ENCODE measurements at regions of chr1 and their contacts with region 1.

Region 1: DNA sequence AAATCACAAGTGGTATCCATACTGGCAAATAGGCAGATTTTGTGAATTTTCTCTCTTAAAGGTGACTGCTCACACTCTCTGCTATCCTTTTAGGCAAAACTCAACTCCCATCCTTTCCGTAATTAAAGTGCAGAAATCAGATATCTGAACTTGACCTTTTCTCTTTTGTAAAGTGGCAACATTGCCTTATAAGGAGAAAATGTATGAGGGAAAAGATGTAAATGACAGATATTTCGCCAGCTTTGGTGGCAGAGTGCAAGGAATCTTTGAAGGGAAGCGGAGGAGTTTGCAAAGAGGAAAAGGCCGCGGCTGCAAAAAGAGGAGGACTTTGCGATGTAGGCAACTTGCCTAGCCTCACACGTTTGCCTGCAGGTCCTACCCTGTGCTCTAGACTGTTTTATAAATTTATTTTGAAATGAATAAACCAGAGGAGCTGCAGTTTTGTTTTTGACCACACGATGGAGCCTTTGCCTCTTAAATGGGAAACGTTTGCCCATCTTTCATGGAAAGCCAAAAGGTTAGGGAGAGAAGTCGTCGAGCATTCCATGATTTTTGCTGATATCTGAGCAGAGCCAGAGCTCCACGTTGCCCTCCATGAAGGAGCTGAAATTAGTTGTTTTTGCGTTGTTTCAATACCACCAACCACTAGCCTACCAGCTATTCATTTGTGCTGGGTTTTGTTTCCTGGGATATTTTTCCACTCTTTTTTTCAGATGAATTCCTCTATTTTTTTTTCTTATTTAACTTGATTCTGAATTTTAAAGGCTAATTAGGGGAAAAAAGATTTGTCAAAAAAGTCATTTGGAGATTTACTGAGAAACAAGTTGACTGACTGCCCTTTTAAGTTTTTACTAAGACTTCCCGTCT is 242.3 kb downstream of the LMX1A start:
- DNase-seq: peak; percentile 85
- H3K4me3 Mint-ChIP-seq: no peak overlapping the region
- H3K27ac Mint-ChIP-seq: no peak overlapping the region
- H3K4me1 Mint-ChIP-seq: peaks cover 17% of the 10 kb centered on the region
- H3K27me3 Mint-ChIP-seq: peaks cover 16% of the 10 kb centered on the region
- CTCF ChIP-seq: peak; percentile 96

Region 2: DNA sequence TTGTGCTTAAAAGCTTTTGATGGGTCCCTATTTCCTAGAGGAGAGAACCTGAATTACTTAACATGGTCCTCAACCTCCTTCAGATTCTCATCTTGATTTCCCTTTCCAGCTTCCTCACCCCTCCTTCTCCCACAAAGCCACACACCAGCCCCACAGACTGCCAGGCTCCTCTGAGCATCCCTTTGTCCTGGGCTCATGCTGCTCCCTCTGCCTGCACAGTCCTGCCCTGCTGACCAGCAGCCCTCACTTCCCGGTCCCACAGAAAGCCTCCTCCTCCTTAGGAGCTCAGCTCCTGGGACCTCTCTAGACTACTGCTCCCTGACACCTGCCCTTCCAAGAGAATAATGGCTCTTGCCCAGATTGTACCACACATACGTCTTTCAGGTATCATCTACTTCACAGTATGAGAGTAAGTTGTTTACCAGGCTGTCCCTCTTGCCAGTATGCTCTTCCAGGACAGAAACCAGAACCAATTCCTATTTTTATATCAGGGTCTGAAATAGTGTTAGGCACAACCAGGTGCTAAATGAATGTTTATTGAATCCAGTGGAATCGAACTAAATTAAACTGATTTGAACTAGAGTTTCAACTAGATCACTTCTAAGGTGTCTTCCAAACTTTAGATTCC is 131.1 kb before region 1 on chr1:
- CTCF ChIA-PET with region 1: no interaction called
- POLR2A ChIA-PET with region 1: no interaction called
- intact Hi-C with region 1: no loop called
- DNase-seq: no peak
- H3K4me3 Mint-ChIP-seq: no peak overlapping the region
- H3K27ac Mint-ChIP-seq: no peak overlapping the region
- H3K4me1 Mint-ChIP-seq: no peaks in the 10 kb centered on the region
- H3K27me3 Mint-ChIP-seq: peaks cover 2% of the 10 kb centered on the region
- CTCF ChIP-seq: no peak

Region 3: GRCh38 chr1:165138967-165139366 is 24.7 kb after region 1 on chr1:
- CTCF ChIA-PET with region 1: interaction called, 135 read pairs
- POLR2A ChIA-PET with region 1: interaction called, 4 read pairs
- intact Hi-C with region 1: loop called (anchors 1 kb)
- DNase-seq: peak; percentile 46
- H3K4me3 Mint-ChIP-seq: no peak overlapping the region
- H3K27ac Mint-ChIP-seq: no peak overlapping the region
- H3K4me1 Mint-ChIP-seq: no peaks in the 10 kb centered on the region
- H3K27me3 Mint-ChIP-seq: peaks cover 82% of the 10 kb centered on the region
- CTCF ChIP-seq: no peak

Region 4: DNA sequence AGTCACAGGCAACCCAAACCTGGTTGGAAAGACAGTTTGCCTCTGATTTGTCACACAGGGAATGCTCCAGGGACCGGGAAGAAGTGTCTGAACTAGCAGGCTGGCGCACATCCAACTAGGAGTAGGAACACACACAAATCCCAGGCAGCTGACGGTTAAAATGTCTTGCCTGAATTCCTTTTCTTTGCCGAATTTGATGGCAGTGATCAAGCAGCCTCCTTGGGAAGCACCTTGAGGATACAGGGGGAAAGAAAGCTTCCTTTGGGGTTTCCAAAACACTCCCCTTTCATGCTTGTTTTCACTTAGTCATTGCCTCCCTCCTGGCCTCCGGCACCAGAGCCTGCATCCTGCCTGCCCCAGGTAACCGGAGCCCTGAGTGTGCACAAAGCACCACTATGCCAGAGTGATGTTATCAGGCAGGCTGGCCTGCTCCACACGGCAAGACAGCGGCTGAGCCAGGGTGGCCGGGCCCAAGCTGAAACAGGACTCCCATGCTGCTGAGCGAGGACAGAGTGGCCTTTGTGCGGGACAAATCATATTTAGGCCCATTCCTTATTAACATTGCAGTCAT is 48.5 kb after region 1 on chr1:
- CTCF ChIA-PET with region 1: interaction called, 15 read pairs
- POLR2A ChIA-PET with region 1: no interaction called
- intact Hi-C with region 1: no loop called
- DNase-seq: peak; percentile 81
- H3K4me3 Mint-ChIP-seq: no peak overlapping the region
- H3K27ac Mint-ChIP-seq: no peak overlapping the region
- H3K4me1 Mint-ChIP-seq: no peaks in the 10 kb centered on the region
- H3K27me3 Mint-ChIP-seq: peaks cover 14% of the 10 kb centered on the region
- CTCF ChIP-seq: no peak